ENCODE measurements at regions of chr2 and their contacts with region 1.

Region 1: DNA sequence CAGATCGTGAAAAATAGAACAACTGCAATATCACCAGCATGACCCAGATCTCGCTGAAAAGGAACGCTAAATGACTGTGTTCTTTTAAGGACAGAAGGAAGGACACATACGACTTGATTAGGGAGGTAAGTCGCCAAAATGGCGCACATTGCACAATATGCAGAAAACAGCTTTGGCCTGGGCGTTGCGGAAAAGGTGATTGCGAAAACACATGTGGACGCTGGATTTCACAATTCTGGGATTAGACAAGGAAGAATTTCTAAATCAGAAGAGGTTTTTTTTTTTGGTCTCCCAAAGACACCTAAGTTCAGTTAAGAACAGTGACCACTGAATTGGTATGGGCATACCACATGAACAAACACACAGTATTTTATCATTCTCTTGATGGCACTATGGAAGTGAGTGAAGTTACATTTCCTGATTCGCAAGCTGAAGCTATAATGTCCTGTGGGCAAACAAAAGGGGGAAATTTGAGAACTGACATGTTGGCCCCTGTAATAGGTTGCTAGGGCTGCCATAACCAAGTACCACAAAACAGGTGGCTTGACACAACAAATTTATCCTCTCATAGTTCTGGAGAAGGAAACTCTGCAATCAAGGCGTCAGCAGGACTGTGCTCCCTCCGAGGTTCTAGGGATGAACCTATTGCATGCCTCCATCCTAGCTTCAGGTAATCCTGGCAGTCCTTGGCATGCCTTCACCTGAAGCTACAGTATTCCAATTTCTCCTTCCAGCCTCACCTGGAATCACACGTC is 25.8 kb upstream of the ERICH2 start:
- DNase-seq: no peak
- H3K4me3 Mint-ChIP-seq: no peak overlapping the region
- H3K27ac Mint-ChIP-seq: no peak overlapping the region
- H3K4me1 Mint-ChIP-seq: peaks cover 18% of the 10 kb centered on the region
- H3K27me3 Mint-ChIP-seq: no peaks in the 10 kb centered on the region
- CTCF ChIP-seq: no peak

Region 2: GRCh38 chr2:170770606-170771420 is 26.4 kb after region 1 on chr2:
- CTCF ChIA-PET with region 1: interaction called, 8 read pairs
- intact Hi-C with region 1: loop called (anchors 2 kb)
- DNase-seq: peak; percentile 89
- H3K4me3 Mint-ChIP-seq: peak overlapping the region; percentile 81
- H3K27ac Mint-ChIP-seq: peak overlapping the region; percentile 91
- H3K4me1 Mint-ChIP-seq: peaks cover 16% of the 10 kb centered on the region
- H3K27me3 Mint-ChIP-seq: no peaks in the 10 kb centered on the region
- CTCF ChIP-seq: no peak

Region 3: DNA sequence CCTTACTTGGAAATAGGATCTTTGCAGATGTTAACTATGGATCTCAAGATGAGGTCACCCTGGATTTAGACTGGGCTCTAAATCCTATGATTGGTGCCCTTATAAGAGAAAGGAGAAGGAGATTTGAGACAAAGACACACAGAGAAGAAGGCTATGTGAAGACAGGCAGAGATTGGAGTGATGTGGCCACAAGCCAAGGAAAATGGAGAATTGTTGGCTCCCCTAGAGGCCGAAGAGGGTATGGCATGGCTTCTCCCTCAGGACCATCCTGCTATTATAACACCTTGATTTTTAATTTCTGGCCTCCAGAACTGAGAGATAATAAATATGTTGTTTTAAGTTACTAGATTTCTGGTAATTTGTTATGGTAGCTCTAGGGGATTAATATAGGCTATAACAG is 785.5 kb after region 1 on chr2:
- CTCF ChIA-PET with region 1: no interaction called
- intact Hi-C with region 1: no loop called
- DNase-seq: peak; percentile 28
- H3K4me3 Mint-ChIP-seq: no peak overlapping the region
- H3K27ac Mint-ChIP-seq: no peak overlapping the region
- H3K4me1 Mint-ChIP-seq: no peaks in the 10 kb centered on the region
- H3K27me3 Mint-ChIP-seq: peaks cover 71% of the 10 kb centered on the region
- CTCF ChIP-seq: peak; percentile 59

Measured in Calu3 (cell line).